CD14-positive monocyte (primary cell): ENCODE measurements at regions of chr15 and their contacts with region 1.

Region 1: GRCh38 chr15:29461877-29462276 is 192.3 kb upstream of the NSMCE3 start:
- DNase-seq: no peak
- H3K4me3 ChIP-seq: no peak overlapping the region
- H3K4me3 Mint-ChIP-seq: no peak overlapping the region
- H3K27ac ChIP-seq: no peak overlapping the region
- H3K27ac Mint-ChIP-seq: no peak overlapping the region
- H3K4me1 ChIP-seq: no peaks in the 10 kb centered on the region
- H3K4me1 Mint-ChIP-seq: no peaks in the 10 kb centered on the region
- H3K27me3 ChIP-seq: no peaks in the 10 kb centered on the region
- H3K27me3 Mint-ChIP-seq: no peaks in the 10 kb centered on the region
- CTCF ChIP-seq: no peak

Region 2: DNA sequence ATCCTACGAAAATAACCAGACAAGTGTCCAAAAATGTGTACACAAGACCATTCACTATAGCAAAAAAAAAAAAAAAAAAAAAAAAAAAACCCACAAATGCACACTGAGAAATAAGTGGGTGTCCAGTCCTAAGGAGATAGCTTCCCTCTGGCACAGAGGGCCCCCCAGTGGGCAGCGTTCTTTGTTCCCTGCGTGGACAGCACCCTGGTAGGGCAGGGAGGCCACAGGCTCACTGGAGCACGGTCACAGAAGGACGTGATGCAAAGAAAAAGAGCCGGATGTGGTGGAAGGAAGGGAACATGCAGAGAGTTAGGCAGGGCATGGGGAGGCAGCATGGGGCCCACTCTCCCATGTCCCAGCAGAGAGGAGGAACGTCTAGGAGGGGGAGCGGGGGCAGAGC is 18.4 kb after region 1 on chr15:
- intact Hi-C with region 1: loop called in 1 of 2 experiments (anchors 2 kb)
- DNase-seq: no peak
- H3K4me3 ChIP-seq: no peak overlapping the region
- H3K4me3 Mint-ChIP-seq: no peak overlapping the region
- H3K27ac ChIP-seq: no peak overlapping the region
- H3K27ac Mint-ChIP-seq: no peak overlapping the region
- H3K4me1 ChIP-seq: no peaks in the 10 kb centered on the region
- H3K4me1 Mint-ChIP-seq: no peaks in the 10 kb centered on the region
- H3K27me3 ChIP-seq: no peaks in the 10 kb centered on the region
- H3K27me3 Mint-ChIP-seq: no peaks in the 10 kb centered on the region
- CTCF ChIP-seq: no peak